ENCODE measurements at regions of chr17 and their contacts with region 1.

Region 1: GRCh38 chr17:29760761-29761696 is 138.3 kb upstream of the CORO6 start:
- DNase-seq: peak; percentile 77 to 97 (median 88)
- ATAC-seq: peak; percentile 83
- H3K4me3 ChIP-seq: peak overlapping the region; percentile 91
- H3K4me3 Mint-ChIP-seq: peak overlapping the region; percentile 92
- H3K27ac ChIP-seq: peak overlapping the region; percentile 77 to 80
- H3K27ac Mint-ChIP-seq: peak overlapping the region; percentile 90
- H3K4me1 ChIP-seq: peaks cover 28% of the 10 kb centered on the region
- H3K4me1 Mint-ChIP-seq: peaks cover 41% of the 10 kb centered on the region
- H3K27me3 ChIP-seq: no peaks in the 10 kb centered on the region
- H3K27me3 Mint-ChIP-seq: no peaks in the 10 kb centered on the region
- CTCF ChIP-seq: no peak

Region 2: GRCh38 chr17:29389982-29390850 is 370.8 kb before region 1 on chr17 and contains the start of gene TAOK1:
- CTCF ChIA-PET with region 1: no interaction called
- POLR2A ChIA-PET with region 1: no interaction called
- intact Hi-C with region 1: loop called in 1 of 2 experiments (anchors 5 kb)
- DNase-seq: peak; percentile 93 to 99 (median 98)
- ATAC-seq: peak; percentile 89
- H3K4me3 ChIP-seq: peak within 1 kb of the TSS; percentile 88
- H3K4me3 Mint-ChIP-seq: peak within 1 kb of the TSS; percentile 99
- H3K27ac ChIP-seq: peak within 1 kb of the TSS; percentile 79 to 93
- H3K27ac Mint-ChIP-seq: peak within 1 kb of the TSS; percentile 97
- H3K4me1 ChIP-seq: peaks cover 20% of the 10 kb centered on the region
- H3K4me1 Mint-ChIP-seq: peaks cover 47% of the 10 kb centered on the region
- H3K27me3 ChIP-seq: no peaks in the 10 kb centered on the region
- H3K27me3 Mint-ChIP-seq: no peaks in the 10 kb centered on the region
- CTCF ChIP-seq: no peak
- total RNA-seq, gene TAOK1: 33.1 to 33.8 TPM

Region 3: DNA sequence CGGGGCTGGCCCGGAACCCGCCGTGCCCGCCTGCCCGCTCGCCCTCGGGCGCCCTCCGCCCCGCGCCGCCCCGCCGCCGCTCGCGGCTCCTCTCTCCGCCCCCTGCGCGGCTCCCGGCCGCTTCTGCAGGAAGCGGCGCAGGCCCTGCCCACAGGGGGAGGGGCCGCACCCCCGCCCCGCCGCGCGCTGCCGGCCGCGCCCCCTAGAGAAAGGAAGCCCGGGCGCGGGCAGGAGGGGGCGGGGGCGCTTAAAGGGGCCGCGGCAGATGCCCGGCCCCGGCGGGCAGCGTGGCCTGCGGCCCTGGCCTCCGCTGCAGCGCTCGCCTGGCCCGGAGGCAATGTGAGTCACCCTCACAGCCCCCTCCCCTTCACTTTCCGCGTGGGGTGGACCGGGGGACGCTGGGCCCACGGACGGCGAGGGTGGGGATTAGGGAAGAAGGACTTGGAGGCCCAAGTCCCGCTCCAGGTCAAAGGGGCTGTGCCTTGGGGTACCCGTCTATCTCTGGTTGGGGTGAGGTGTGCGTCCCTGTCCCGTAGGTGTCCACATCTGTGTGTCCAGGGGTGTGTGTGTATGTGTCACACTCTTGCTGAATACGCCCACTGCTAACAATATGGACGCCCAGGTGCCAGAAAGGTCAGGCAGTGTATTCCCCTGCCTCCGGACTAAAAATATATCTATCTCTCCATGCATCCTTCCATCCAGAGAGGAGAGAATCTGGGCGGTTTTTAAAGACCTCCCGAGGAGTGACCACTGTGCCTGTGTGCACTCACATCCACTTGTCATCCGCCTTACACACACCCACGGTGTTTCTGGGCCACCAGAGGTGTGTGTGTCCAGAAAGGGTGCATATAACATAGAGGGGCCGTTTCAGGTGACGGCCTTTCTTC is 171.3 kb before region 1 on chr17 and contains the start of gene GIT1:
- CTCF ChIA-PET with region 1: no interaction called
- POLR2A ChIA-PET with region 1: no interaction called
- intact Hi-C with region 1: loop called in 1 of 2 experiments (anchors 5 kb)
- DNase-seq: peak; percentile 65 to 94 (median 81)
- ATAC-seq: peak; percentile 83
- H3K4me3 ChIP-seq: peak within 1 kb of the TSS; percentile 84
- H3K4me3 Mint-ChIP-seq: peak within 1 kb of the TSS; percentile 98
- H3K27ac ChIP-seq: peak within 1 kb of the TSS; percentile 60 to 64
- H3K27ac Mint-ChIP-seq: peak within 1 kb of the TSS; percentile 86
- H3K4me1 ChIP-seq: peaks cover 84% of the 10 kb centered on the region
- H3K4me1 Mint-ChIP-seq: peaks cover 71% of the 10 kb centered on the region
- H3K27me3 ChIP-seq: no peaks in the 10 kb centered on the region
- H3K27me3 Mint-ChIP-seq: no peaks in the 10 kb centered on the region
- CTCF ChIP-seq: no peak
- total RNA-seq, gene GIT1: 35.8 to 36.7 TPM

Region 4: DNA sequence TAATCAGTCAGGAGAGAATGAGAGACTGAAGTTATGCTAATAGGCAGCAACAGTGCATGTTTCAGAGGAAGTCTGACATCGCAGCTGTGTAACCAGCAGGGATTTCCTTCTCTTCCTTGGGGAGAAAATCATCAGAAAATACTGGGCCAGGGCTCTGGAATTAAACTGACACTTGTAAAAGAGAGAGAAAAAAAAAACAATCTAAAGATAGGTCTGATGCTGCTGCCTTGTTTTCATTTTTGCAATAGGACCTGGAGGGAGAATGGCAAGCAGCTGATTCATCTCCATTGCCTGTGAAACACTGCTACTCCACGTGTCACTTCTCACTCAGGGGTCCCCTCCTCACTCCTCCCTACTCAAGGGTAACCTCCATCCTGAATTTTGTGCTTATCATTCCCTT is 120.6 kb before region 1 on chr17:
- CTCF ChIA-PET with region 1: interaction called, 6 read pairs
- POLR2A ChIA-PET with region 1: interaction called, 16 read pairs
- intact Hi-C with region 1: no loop called
- DNase-seq: no peak
- ATAC-seq: no peak
- H3K4me3 ChIP-seq: no peak overlapping the region
- H3K4me3 Mint-ChIP-seq: no peak overlapping the region
- H3K27ac ChIP-seq: no peak overlapping the region
- H3K27ac Mint-ChIP-seq: peak overlapping the region; percentile 77
- H3K4me1 ChIP-seq: no peaks in the 10 kb centered on the region
- H3K4me1 Mint-ChIP-seq: peaks cover 12% of the 10 kb centered on the region
- H3K27me3 ChIP-seq: no peaks in the 10 kb centered on the region
- H3K27me3 Mint-ChIP-seq: no peaks in the 10 kb centered on the region
- CTCF ChIP-seq: no peak

Region 5: GRCh38 chr17:29705386-29705785 is 55.6 kb before region 1 on chr17:
- CTCF ChIA-PET with region 1: interaction called, 11 read pairs
- POLR2A ChIA-PET with region 1: interaction called, 97 read pairs
- intact Hi-C with region 1: loop called (anchors 1 to 2 kb)
- DNase-seq: peak in 3 of 14 experiments; percentile 43 to 63 (median 50)
- ATAC-seq: no peak
- H3K4me3 ChIP-seq: peak overlapping the region; percentile 46
- H3K4me3 Mint-ChIP-seq: peak overlapping the region; percentile 71
- H3K27ac ChIP-seq: peak overlapping the region; percentile 81 to 91
- H3K27ac Mint-ChIP-seq: peak overlapping the region; percentile 92
- H3K4me1 ChIP-seq: peaks cover 37% of the 10 kb centered on the region
- H3K4me1 Mint-ChIP-seq: peaks cover 61% of the 10 kb centered on the region
- H3K27me3 ChIP-seq: no peaks in the 10 kb centered on the region
- H3K27me3 Mint-ChIP-seq: no peaks in the 10 kb centered on the region
- CTCF ChIP-seq: no peak

Region 6: GRCh38 chr17:29722411-29723198 is 38.4 kb before region 1 on chr17:
- CTCF ChIA-PET with region 1: interaction called, 5 read pairs
- POLR2A ChIA-PET with region 1: interaction called, 64 read pairs
- intact Hi-C with region 1: loop called in 1 of 2 experiments (anchors 1 kb)
- DNase-seq: peak; percentile 15 to 82 (median 43)
- ATAC-seq: peak; percentile 76
- H3K4me3 ChIP-seq: peak overlapping the region; percentile 30
- H3K4me3 Mint-ChIP-seq: peak overlapping the region; percentile 82
- H3K27ac ChIP-seq: peak overlapping the region; percentile 73 to 79
- H3K27ac Mint-ChIP-seq: peak overlapping the region; percentile 87
- H3K4me1 ChIP-seq: peaks cover 53% of the 10 kb centered on the region
- H3K4me1 Mint-ChIP-seq: peaks cover 85% of the 10 kb centered on the region
- H3K27me3 ChIP-seq: no peaks in the 10 kb centered on the region
- H3K27me3 Mint-ChIP-seq: no peaks in the 10 kb centered on the region
- CTCF ChIP-seq: no peak

Region 7: GRCh38 chr17:29777663-29778062 is 16.6 kb after region 1 on chr17:
- CTCF ChIA-PET with region 1: interaction called, 21 read pairs
- POLR2A ChIA-PET with region 1: interaction called, 25 read pairs
- intact Hi-C with region 1: loop called in 1 of 2 experiments (anchors 2 kb)
- DNase-seq: no peak
- ATAC-seq: no peak
- H3K4me3 ChIP-seq: no peak overlapping the region
- H3K4me3 Mint-ChIP-seq: no peak overlapping the region
- H3K27ac ChIP-seq: no peak overlapping the region
- H3K27ac Mint-ChIP-seq: no peak overlapping the region
- H3K4me1 ChIP-seq: peaks cover 3% of the 10 kb centered on the region
- H3K4me1 Mint-ChIP-seq: peaks cover 9% of the 10 kb centered on the region
- H3K27me3 ChIP-seq: no peaks in the 10 kb centered on the region
- H3K27me3 Mint-ChIP-seq: no peaks in the 10 kb centered on the region
- CTCF ChIP-seq: no peak

Measured in CD4-positive, alpha-beta T cell (primary cell).